H1 (cell line): ENCODE measurements at regions of chr1 and their contacts with region 1.

Region 1: DNA sequence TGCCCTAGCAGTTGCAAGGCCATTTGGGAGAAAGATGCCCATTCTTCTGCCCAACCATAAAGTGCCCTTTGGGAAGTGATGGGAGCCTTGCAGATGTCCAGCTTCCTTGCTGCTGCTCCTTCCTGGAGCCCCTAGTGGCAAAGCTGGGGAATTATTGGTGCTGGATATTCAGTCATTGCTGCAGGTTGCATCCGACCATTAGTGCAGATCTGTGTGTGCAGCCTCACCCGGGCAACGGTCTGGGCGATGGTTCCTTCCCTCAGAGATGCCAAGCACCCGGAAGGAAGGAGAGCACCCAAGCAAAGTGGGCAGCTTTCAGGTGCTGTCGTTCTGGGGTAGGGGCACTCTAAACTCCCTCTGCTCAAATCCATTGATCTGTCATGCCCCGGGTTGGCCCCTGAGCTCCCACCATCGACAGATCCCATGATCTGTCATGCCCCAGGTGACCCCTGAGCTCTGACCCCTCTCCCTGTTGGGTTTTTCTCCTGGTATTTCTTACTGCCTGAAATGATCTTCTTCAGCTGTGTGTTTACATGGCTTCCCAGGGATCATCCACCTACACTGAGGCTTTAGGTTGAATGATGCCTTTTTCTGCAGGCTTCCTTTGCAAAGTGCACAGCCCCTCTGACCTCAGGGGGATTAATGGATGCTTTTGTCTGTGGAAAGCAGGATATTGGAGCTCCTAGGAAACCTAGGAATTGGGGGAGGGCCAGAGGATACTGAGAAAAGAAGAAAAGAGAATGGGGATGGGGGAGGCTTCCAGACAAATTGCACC is 467.5 kb downstream of the PTPRU start:
- DNase-seq: peak in 1 of 2 experiments; percentile 61
- H3K4me3 ChIP-seq: no peak overlapping the region
- H3K27ac ChIP-seq: no peak overlapping the region
- H3K4me1 ChIP-seq: peaks cover 0 to 1% (median under 1%) of the 10 kb centered on the region in 4 experiments; a peak in 3 of 7 replicates
- H3K27me3 ChIP-seq: no peaks in the 10 kb centered on the region
- CTCF ChIP-seq: peak; percentile 71 to 88 (median 78)
- EP300 ChIP-seq: no peak
- POLR2A ChIP-seq: no peak
- RAD21 ChIP-seq: peak; percentile 62 to 68

Region 2: GRCh38 chr1:29341936-29342335 is 361.8 kb before region 1 on chr1:
- CTCF ChIA-PET with region 1: interaction called, 10 read pairs
- POLR2A ChIA-PET with region 1: no interaction called
- DNase-seq: no peak
- H3K4me3 ChIP-seq: no peak overlapping the region
- H3K27ac ChIP-seq: no peak overlapping the region
- H3K4me1 ChIP-seq: peaks cover 0 to 8% (median 4%) of the 10 kb centered on the region in 4 experiments; a peak in 4 of 7 replicates
- H3K27me3 ChIP-seq: no peaks in the 10 kb centered on the region; a peak in 1 of 7 replicates
- CTCF ChIP-seq: peak in 2 of 3 experiments; percentile 17 to 19; a peak in 2 of 4 replicates
- EP300 ChIP-seq: no peak
- POLR2A ChIP-seq: no peak
- RAD21 ChIP-seq: peak in 1 of 2 experiments; percentile 33; a peak in 1 of 4 replicates

Region 3: GRCh38 chr1:29513357-29513756 is 190.4 kb before region 1 on chr1:
- CTCF ChIA-PET with region 1: interaction called, 14 read pairs
- POLR2A ChIA-PET with region 1: no interaction called
- DNase-seq: peak; percentile 43 to 69
- H3K4me3 ChIP-seq: no peak overlapping the region
- H3K27ac ChIP-seq: no peak overlapping the region
- H3K4me1 ChIP-seq: no peaks in the 10 kb centered on the region
- H3K27me3 ChIP-seq: peaks cover 0 to 2% (median 0%) of the 10 kb centered on the region in 4 experiments; a peak in 2 of 7 replicates
- CTCF ChIP-seq: peak; percentile 71 to 83 (median 74)
- EP300 ChIP-seq: no peak
- POLR2A ChIP-seq: no peak
- RAD21 ChIP-seq: peak; percentile 94 to 97

Region 4: DNA sequence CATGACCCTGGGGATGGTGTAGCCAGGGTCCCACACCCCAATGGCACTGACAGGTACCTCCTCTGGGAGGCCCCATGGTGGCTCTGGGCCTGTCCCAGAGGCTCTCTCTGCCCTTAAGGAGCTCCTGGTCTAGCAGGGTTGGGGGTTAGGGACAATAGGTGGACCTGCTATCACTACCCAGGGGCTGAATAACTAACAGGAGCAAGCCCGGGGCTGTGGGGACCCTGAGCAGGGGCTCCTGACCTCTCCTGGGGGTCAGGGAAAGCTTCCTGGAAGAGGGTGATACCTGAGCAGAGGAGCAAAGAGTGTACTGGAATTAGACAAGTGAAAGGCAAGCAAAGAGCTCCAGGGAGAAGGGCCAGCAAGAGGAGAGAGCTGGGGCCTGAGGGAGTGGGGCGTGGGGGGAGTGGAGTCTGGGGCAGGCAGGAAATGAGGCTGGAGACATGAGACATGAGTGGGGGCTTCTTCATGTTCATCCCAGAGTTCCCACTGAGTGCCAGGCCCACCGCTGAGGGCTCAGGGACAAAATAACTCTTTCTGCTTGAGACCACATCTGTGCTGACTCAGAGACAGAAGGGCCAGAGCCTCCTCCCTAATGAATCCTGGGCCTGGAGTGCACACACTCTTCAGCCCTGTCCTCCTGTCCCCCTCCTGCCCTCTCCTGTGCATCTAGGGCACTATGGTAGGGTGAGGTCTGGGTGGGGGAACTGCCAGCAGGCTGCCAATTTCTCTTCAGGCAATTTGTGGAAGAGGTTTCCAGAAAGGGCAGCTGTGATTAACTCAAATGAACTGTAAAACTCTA is 50.2 kb after region 1 on chr1:
- CTCF ChIA-PET with region 1: interaction called, 11 read pairs
- POLR2A ChIA-PET with region 1: no interaction called
- DNase-seq: peak in 1 of 2 experiments; percentile 24
- H3K4me3 ChIP-seq: no peak overlapping the region
- H3K27ac ChIP-seq: no peak overlapping the region
- H3K4me1 ChIP-seq: no peaks in the 10 kb centered on the region
- H3K27me3 ChIP-seq: no peaks in the 10 kb centered on the region
- CTCF ChIP-seq: no peak
- EP300 ChIP-seq: no peak
- POLR2A ChIP-seq: no peak
- RAD21 ChIP-seq: no peak

Region 5: DNA sequence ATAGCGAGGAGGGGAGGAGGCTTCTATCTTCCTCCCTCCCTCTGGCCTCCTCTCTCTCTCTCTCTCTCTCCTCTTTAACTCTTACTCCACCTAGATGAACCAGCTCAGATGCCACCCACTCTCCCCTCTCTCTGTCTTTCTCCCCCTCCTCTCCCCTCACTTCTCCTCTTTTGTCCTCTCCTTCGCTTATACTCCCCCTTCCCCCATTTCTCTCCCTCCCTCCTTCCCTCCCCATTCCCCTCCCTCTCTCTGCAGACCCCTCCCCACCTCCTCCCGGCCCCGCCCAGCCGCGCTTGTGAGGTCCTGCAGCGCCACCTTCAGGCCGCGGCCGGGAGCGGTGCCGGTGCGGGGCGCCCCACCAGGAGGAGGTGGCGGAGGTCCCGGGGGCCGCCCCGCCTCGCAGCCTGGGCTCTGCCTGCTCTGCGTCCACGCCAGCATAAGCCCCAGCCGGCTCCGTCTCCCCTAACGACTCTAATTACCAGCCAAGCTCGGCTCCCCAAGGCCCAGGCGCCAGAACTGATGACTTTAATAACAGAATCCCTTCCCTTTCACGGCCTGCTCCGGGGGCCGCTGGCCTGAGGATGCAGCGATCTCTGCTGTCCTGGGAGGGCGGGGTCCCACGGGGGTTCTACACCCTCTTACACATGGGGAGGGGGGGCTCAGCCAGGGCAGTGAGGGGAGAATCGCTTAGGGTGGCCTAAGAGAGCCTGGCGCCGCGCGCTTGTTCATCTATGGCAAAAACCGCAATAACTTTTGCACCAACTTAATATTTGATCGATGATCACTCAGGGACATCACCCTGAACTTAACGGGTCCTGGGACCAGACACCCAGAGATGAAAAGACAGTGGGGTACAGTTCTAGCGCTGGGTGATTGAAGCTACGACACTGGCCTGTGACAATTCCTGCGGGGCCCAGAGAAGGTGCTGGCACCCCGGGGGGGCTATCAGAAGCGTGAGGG is 382.3 kb after region 1 on chr1:
- CTCF ChIA-PET with region 1: interaction called, 21 read pairs
- POLR2A ChIA-PET with region 1: no interaction called
- DNase-seq: peak; percentile 57 to 98
- H3K4me3 ChIP-seq: peak overlapping the region in 3 of 4 experiments; percentile 9 to 53 (median 19); a peak in 4 of 8 replicates
- H3K27ac ChIP-seq: no peak overlapping the region
- H3K4me1 ChIP-seq: peaks cover 0 to 10% (median 3%) of the 10 kb centered on the region in 4 experiments; a peak in 5 of 7 replicates
- H3K27me3 ChIP-seq: no peaks in the 10 kb centered on the region; a peak in 1 of 7 replicates
- CTCF ChIP-seq: peak; percentile 67 to 92 (median 77)
- EP300 ChIP-seq: no peak
- POLR2A ChIP-seq: no peak
- RAD21 ChIP-seq: peak; percentile 88 to 90